ENCODE measurements at regions of chr3 and their contacts with region 1.

Region 1: DNA sequence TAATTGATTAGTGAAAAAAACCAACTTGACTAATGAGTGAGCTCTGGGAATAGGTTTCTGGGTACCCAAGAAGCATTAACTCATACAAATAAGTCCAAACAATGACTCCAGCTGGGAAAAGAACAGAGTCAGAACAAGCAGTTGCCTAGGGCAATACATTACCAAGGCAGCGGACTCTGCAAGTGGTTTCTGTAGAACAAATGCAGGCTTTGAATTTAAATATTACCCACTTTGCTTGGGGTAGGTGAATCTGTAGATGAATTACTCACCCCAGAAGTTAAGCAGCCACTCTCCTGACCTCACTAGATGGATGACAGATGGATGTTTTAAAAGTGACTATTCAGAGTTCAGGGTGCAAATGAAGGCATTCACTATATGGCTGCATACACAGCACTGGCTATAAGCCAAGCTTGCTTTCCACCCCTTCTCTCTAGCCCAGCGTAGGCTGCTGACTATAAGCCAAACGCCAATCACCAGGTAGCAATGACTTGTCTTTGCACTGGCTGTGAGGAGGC is 73.1 kb upstream of the BHLHE40 start:
- DNase-seq: peak; percentile 54
- ATAC-seq: peak; percentile 75
- H3K4me3 Mint-ChIP-seq: no peak overlapping the region
- H3K27ac Mint-ChIP-seq: peak overlapping the region; percentile 53
- H3K4me1 Mint-ChIP-seq: peaks cover 75% of the 10 kb centered on the region
- H3K27me3 Mint-ChIP-seq: no peaks in the 10 kb centered on the region

Region 2: DNA sequence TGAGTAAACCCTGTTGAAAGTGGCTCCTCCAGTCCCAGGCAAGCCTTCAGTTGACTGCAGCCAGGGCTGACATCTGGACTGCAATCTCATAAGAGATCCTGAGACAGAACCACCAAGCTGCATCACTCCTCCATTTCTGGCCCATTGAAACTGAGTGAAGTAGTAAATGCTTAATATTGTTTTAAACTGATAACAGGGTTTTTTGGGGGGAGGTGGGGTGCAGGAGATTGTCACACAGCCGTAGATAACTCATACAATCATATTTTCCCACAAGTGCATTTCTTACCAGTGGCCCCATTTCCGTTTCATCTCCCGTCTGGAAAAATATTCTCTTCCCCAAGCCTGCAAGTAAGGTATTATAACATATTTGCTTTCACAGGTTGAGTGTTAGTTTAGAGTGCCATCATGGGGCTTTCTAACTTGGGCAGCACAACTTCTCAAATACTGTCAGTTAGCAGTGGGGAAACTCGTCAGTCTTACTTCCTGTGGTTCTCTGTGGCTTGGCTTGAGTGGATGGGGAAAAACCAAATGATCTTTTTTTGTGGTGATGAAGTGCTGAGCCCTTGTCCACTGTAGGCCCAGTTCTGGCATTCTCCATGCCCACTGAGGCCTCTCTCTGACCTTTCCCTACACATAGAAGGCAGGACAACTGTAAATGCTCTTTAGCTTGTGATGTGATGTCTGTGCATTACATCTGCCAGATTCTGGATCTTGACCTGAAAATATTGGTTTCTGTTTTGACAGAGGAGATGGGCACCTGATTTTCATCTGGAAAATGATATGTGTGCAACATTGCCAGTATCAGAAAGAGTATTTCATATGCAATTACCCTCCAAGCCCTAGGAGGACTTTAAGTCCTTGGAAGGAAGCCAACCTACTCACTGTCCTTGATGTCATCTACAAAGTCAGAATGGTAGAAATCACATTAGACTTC is 17.0 kb before region 1 on chr3:
- CTCF ChIA-PET with region 1: interaction called, 5 read pairs
- POLR2A ChIA-PET with region 1: no interaction called
- intact Hi-C with region 1: loop called (anchors 1 kb)
- DNase-seq: peak; percentile 50
- ATAC-seq: peak; percentile 90
- H3K4me3 Mint-ChIP-seq: peak overlapping the region; percentile 5
- H3K27ac Mint-ChIP-seq: peak overlapping the region; percentile 83
- H3K4me1 Mint-ChIP-seq: peaks cover 37% of the 10 kb centered on the region
- H3K27me3 Mint-ChIP-seq: peaks cover 2% of the 10 kb centered on the region

Region 3: GRCh38 chr3:4926892-4927291 is 20.7 kb after region 1 on chr3:
- CTCF ChIA-PET with region 1: interaction called, 3 read pairs
- POLR2A ChIA-PET with region 1: no interaction called
- intact Hi-C with region 1: loop called in 1 of 2 experiments (anchors 1 kb)
- DNase-seq: no peak
- ATAC-seq: no peak
- H3K4me3 Mint-ChIP-seq: no peak overlapping the region
- H3K27ac Mint-ChIP-seq: no peak overlapping the region
- H3K4me1 Mint-ChIP-seq: peaks cover 24% of the 10 kb centered on the region
- H3K27me3 Mint-ChIP-seq: no peaks in the 10 kb centered on the region

Region 4: GRCh38 chr3:5035692-5036391 is 129.7 kb after region 1 on chr3:
- CTCF ChIA-PET with region 1: no interaction called
- POLR2A ChIA-PET with region 1: no interaction called
- intact Hi-C with region 1: no loop called
- DNase-seq: no peak
- ATAC-seq: peak; percentile 7
- H3K4me3 Mint-ChIP-seq: no peak overlapping the region
- H3K27ac Mint-ChIP-seq: no peak overlapping the region
- H3K4me1 Mint-ChIP-seq: peaks cover 16% of the 10 kb centered on the region
- H3K27me3 Mint-ChIP-seq: peaks cover 2% of the 10 kb centered on the region

Region 5: DNA sequence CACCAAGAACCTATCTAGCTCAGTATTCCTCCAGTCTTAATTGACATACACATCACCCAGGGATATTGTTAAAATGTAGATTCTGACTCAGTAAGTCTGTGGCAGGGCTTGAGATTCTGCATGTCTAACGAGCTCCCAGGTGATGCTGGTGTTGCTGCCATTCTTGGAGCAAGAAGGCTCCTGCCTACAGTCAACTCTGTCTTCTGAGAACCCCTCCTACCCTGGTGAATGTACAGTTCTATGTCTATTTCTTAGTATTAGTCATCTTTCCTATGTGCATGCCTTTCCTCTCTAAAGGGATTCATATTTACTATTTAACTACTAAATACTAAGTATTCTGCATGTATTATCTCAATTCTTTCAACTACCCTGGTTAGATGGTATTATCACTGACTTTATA is 550.0 kb after region 1 on chr3:
- CTCF ChIA-PET with region 1: no interaction called
- POLR2A ChIA-PET with region 1: no interaction called
- intact Hi-C with region 1: no loop called
- DNase-seq: peak; percentile 6
- ATAC-seq: peak; percentile 74
- H3K4me3 Mint-ChIP-seq: no peak overlapping the region
- H3K27ac Mint-ChIP-seq: no peak overlapping the region
- H3K4me1 Mint-ChIP-seq: no peaks in the 10 kb centered on the region
- H3K27me3 Mint-ChIP-seq: peaks cover 19% of the 10 kb centered on the region

Measured in activated CD4-positive, alpha-beta T cell treated with anti-CD3 and anti-CD28 coated beads for 36 hours (primary cell).